Dorsolateral prefrontal cortex (tissue), 120 donors: ENCODE measurements at regions of chr20 and their contacts with region 1.

Region 1: GRCh38 chr20:8389381-8390036 is 257.4 kb downstream of the PLCB1 start:
- DNase-seq: no peak
- H3K4me3 ChIP-seq: peak overlapping the region in 1 of 59 donors; percentile 6
- H3K27ac ChIP-seq: peak overlapping the region in 33 of 59 donors; percentile 0 to 81 (median 24)
- H3K27me3 ChIP-seq: no peaks in the 10 kb centered on the region
- CTCF ChIP-seq: peak; percentile 51 to 82 (median 69)

Region 2: GRCh38 chr20:8019246-8019997 is 370.1 kb before region 1 on chr20 and contains the start of gene TMX4:
- intact Hi-C with region 1: loop called in 1 of 2 experiments (anchors 10 kb)
- DNase-seq: peak; percentile 92 to 98 (median 95)
- H3K4me3 ChIP-seq: peak within 1 kb of the TSS; percentile 51 to 97 (median 87)
- H3K27ac ChIP-seq: peak within 1 kb of the TSS; percentile 78 to 100 (median 99)
- H3K27me3 ChIP-seq: no peaks in the 10 kb centered on the region
- CTCF ChIP-seq: peak in 46 of 56 donors; percentile 12 to 58 (median 40)
- total RNA-seq, gene TMX4: 44.7 to 172 (median 104) TPM

Region 3: DNA sequence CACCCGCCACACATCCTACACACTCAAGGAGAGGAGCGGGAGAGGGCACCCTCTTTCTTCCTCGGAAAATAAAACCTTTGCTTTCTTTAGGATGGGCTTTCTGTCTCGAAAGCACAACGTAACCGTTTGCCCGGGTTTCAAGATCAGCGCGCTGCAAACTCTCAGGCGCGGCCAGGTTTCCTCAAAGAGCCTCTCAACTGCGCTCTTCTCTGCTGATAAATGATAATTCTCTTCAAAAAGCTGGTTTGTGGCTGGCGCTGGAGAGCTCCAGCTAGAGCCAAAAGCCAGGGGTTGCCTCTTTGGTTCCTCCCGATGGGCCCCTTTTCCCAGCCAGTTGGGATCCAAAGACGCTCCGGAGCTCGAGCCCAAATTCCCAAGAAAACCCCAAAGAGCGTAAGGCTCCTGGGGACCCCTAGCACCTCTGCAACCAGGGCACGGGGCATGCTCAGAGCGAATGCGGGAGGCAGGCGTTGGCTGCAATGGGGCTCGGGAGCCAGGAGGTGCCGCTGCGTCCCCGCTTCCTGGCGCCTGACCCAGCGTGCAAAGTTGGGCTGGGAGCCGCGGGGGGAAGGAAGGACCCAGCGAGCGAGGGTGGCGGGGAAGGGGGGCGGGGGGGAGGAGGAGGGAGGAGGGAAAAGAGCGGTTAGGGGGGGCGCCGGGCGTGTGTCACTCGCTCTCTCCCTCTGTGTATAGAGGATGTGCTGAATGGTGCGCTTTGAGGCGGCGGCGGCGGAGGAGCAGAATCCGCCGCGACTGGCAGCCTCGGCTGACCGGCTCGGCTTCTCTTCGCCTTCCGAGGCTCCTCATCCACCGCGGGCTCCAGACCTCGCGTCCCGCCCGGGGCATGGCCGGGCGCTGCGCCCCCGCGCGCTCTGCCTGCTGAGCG is 257.7 kb before region 1 on chr20 and contains the start of gene PLCB1:
- intact Hi-C with region 1: loop called (anchors 1 to 2 kb)
- DNase-seq: peak; percentile 61 to 88 (median 79)
- H3K4me3 ChIP-seq: peak within 1 kb of the TSS; percentile 55 to 87 (median 74)
- H3K27ac ChIP-seq: peak within 1 kb of the TSS in 58 of 59 donors; percentile 24 to 94 (median 84)
- H3K27me3 ChIP-seq: peaks cover 0 to 43% (median 0%) of the 10 kb centered on the region in 45 donors
- CTCF ChIP-seq: peak; percentile 29 to 91 (median 78)
- total RNA-seq, gene PLCB1: 68.3 to 259 (median 170) TPM

Region 4: GRCh38 chr20:8255945-8256632 is 133.4 kb before region 1 on chr20:
- intact Hi-C with region 1: no loop called
- DNase-seq: no peak
- H3K4me3 ChIP-seq: no peak overlapping the region
- H3K27ac ChIP-seq: no peak overlapping the region
- H3K27me3 ChIP-seq: no peaks in the 10 kb centered on the region
- CTCF ChIP-seq: no peak